ENCODE measurements at regions of chr11 and their contacts with region 1.

Region 1: DNA sequence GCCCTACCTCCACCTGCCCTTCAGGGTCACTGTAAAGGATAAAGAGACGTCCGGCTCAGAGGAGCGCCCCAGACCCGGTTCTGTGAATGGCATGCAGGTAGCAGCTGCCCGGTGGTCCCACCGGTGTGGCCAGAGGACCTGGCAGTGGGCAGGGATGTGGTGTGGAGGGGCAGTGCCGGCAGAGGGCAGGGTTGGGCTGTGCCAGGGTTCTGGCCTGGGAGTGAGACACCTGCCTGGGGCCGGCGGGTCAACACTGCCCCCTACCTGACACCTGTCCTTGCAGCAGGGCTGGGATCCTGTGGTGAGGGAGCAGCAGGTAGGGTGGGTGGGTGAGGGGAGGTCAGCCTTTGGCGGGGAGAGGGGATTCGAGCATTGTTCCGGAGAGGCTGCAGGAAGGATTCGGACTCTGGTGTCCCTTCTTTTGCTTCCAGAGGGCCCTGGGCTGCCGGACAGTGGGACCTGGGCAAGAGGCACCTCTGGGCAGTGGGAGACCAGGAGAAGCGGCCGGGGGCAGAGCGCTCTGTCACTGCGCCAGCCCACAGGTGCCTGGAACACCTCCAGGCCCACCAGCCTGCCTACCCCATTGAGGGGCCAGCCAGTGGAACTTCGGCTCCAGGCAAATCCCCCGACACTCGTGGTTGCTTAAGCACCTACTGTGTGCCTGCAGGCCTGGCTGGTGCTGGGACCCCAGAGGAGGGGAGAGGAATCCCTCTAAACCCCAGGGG is 1.6 kb upstream of the PHLDA2 start:
- DNase-seq: peak; percentile 74
- ATAC-seq: peak; percentile 21
- H3K4me3 Mint-ChIP-seq: peak overlapping the region; percentile 63
- H3K27ac Mint-ChIP-seq: peak overlapping the region; percentile 63
- H3K4me1 Mint-ChIP-seq: peaks cover 38% of the 10 kb centered on the region
- H3K27me3 Mint-ChIP-seq: peaks cover 22% of the 10 kb centered on the region

Region 2: GRCh38 chr11:2885676-2886081 is 45.2 kb before region 1 on chr11 and contains the start of gene CDKN1C:
- CTCF ChIA-PET with region 1: interaction called, 51 read pairs
- DNase-seq: peak; percentile 83
- ATAC-seq: peak; percentile 92
- H3K4me3 Mint-ChIP-seq: peak within 1 kb of the TSS; percentile 75
- H3K27ac Mint-ChIP-seq: no peak within 1 kb of the TSS
- H3K4me1 Mint-ChIP-seq: peaks cover 9% of the 10 kb centered on the region
- H3K27me3 Mint-ChIP-seq: peaks cover 35% of the 10 kb centered on the region
- total RNA-seq, gene CDKN1C: 0.44 to 0.87 TPM

Region 3: DNA sequence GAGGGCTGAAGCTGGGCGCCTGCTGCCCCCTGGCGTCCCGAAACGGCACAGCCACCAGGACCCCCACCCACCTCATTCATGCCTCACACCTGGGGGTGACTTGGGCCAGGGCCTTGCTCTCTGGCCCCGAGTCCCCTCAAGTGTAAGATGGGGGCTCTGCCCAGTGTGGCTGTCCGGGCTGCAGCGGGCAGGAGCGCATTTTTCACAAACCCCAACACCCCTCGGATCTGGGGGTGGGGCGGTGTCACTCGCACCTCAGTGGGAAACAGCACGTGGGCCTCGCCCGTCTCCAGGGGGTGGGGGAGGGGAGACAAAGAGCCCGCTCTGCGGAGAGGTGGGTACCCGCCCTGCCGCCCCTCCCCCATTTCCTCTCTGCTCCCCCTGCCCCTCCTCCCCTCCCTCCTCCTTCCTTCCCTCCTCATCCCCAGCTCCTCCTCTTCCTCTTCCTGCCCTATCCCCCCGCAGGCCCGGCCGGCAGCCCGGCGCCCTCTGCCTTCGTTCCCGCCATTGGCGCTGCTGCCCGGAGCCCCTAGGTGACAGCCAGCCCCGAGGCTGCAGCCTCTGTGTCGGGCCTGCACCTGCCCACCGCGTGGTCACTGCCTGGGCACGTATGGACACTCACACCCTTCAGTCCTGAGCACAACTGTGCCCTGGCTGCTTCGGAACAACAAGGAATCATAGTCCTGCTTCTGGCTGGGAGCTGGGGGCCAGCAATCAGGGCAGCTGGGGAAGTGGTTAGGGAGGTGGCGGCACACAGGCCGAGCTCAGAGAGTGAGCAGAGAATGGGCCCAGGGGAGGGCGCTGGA is 38.4 kb before region 1 on chr11:
- CTCF ChIA-PET with region 1: interaction called, 51 read pairs
- DNase-seq: peak; percentile 81
- ATAC-seq: peak; percentile 74
- H3K4me3 Mint-ChIP-seq: peak overlapping the region; percentile 77
- H3K27ac Mint-ChIP-seq: peak overlapping the region; percentile 74
- H3K4me1 Mint-ChIP-seq: peaks cover 18% of the 10 kb centered on the region
- H3K27me3 Mint-ChIP-seq: peaks cover 4% of the 10 kb centered on the region

Region 4: GRCh38 chr11:2901854-2902783 is 28.7 kb before region 1 on chr11:
- CTCF ChIA-PET with region 1: interaction called, 20 read pairs
- DNase-seq: peak; percentile 99
- ATAC-seq: peak; percentile 96
- H3K4me3 Mint-ChIP-seq: peak overlapping the region; percentile 68
- H3K27ac Mint-ChIP-seq: peak overlapping the region; percentile 72
- H3K4me1 Mint-ChIP-seq: peaks cover 36% of the 10 kb centered on the region
- H3K27me3 Mint-ChIP-seq: peaks cover 3% of the 10 kb centered on the region

Region 5: DNA sequence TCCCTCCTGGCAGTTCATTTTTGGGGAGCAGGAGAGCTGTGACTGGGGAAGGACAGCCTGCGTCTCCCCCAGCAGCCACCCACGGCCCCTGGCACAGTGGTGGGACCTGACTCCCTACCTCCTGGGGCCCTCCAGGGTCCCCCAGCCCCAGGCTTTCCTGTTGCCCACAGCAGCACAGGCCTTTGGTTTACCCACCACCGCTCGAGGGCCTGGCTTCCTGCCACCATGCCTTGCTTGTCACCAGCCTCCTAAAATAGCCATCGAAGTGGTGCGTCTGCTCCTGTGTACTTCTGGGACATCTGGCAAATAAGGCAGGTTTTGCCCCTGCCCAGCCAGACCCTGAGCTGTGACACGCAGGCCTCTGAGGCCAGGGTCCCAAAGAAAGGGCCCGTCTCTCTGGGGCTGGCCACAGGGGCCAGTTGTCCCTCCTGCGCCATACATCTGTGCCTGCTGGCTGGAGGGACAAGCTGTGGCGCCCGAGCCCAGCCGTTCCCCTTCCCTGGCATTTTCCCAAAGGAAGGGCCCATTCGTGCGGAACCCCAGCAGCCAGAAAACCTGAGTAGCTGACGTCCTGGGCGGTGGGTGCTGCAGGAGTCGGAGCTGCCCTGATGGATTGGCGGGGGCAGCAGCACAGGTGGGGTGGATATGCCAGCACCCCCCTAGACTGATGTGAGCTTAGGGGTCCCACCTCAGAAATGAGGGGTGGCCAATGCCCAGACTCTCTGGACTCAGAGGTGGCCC is 16.2 kb before region 1 on chr11:
- CTCF ChIA-PET with region 1: interaction called, 19 read pairs
- DNase-seq: no peak
- ATAC-seq: no peak
- H3K4me3 Mint-ChIP-seq: no peak overlapping the region
- H3K27ac Mint-ChIP-seq: no peak overlapping the region
- H3K4me1 Mint-ChIP-seq: peaks cover 13% of the 10 kb centered on the region
- H3K27me3 Mint-ChIP-seq: no peaks in the 10 kb centered on the region

Region 6: GRCh38 chr11:3014057-3014938 is 83.4 kb after region 1 on chr11:
- CTCF ChIA-PET with region 1: interaction called, 12 read pairs
- DNase-seq: peak; percentile 95
- ATAC-seq: peak; percentile 83
- H3K4me3 Mint-ChIP-seq: peak overlapping the region; percentile 23
- H3K27ac Mint-ChIP-seq: peak overlapping the region; percentile 98
- H3K4me1 Mint-ChIP-seq: peaks cover 92% of the 10 kb centered on the region
- H3K27me3 Mint-ChIP-seq: no peaks in the 10 kb centered on the region

Region 7: GRCh38 chr11:3021125-3021524 is 90.3 kb after region 1 on chr11:
- CTCF ChIA-PET with region 1: interaction called, 15 read pairs
- DNase-seq: peak; percentile 68
- ATAC-seq: peak; percentile 74
- H3K4me3 Mint-ChIP-seq: no peak overlapping the region
- H3K27ac Mint-ChIP-seq: no peak overlapping the region
- H3K4me1 Mint-ChIP-seq: peaks cover 67% of the 10 kb centered on the region
- H3K27me3 Mint-ChIP-seq: no peaks in the 10 kb centered on the region